IMR-90 (cell line): ENCODE measurements at regions of chr9 and their contacts with region 1.

Region 1: DNA sequence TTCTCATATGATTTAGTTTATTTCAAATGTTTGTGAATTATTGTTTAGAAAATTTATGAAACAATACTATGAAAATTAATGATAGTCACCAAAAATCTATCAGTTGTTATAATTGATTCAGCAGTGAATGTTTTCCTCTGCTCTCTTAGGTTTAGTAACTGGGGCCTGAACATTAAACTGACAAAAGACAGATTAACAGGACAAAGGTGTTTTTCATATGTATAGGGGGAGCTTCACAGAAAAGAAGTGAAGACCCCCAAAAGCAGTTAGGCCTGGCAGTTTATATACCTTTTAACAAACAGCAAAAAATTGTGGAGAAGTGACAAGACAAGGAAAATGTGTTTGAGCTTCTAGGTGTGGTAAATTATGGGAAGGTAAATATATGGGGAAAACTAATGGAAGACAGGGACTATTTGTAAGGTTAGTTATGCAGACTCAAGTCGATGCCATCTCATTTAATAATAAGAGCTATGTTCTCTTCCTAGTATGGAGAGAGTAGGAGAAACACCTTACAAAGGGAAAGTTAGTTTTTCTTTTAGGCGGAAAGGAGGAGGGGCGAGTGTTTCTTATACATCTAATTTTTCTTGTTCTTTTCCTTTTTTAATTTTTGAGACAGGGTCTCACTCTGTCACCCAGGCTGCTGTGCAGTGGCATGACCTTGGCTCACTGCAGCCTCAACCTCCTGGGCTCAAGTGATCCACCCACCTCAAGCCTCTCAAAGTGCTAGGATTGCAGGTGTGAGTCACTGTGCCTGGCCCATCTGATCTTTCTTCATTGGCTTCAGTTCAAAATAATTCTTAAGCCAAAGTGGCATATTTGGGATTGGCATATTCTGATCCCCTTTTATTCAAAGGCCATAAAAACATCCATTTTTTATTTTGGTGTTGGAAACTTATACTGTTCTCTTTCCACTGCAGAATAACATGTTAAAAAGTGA is 77.8 kb downstream of the C9orf153 start:
- DNase-seq: no peak
- ATAC-seq: no peak
- H3K4me3 ChIP-seq: no peak overlapping the region
- H3K27ac ChIP-seq: no peak overlapping the region
- H3K4me1 ChIP-seq: no peaks in the 10 kb centered on the region
- H3K27me3 ChIP-seq: peaks cover 2% of the 10 kb centered on the region; the same call in 1 of the 2 replicates
- CTCF ChIP-seq: no peak
- POLR2A ChIP-seq: no peak
- RAD21 ChIP-seq: no peak

Region 2: GRCh38 chr9:86046930-86047341 is 134.7 kb before region 1 on chr9:
- CTCF ChIA-PET with region 1: no interaction called
- POLR2A ChIA-PET with region 1: no interaction called
- dilution Hi-C with region 1: no loop called
- in situ Hi-C with region 1: no loop called
- intact Hi-C with region 1: no loop called
- DNase-seq: no peak
- ATAC-seq: no peak
- H3K4me3 ChIP-seq: no peak overlapping the region
- H3K27ac ChIP-seq: no peak overlapping the region
- H3K4me1 ChIP-seq: no peaks in the 10 kb centered on the region
- H3K27me3 ChIP-seq: no peaks in the 10 kb centered on the region
- CTCF ChIP-seq: no peak
- POLR2A ChIP-seq: no peak
- RAD21 ChIP-seq: no peak

Region 3: GRCh38 chr9:86389628-86390027 is 208.0 kb after region 1 on chr9:
- CTCF ChIA-PET with region 1: no interaction called
- POLR2A ChIA-PET with region 1: no interaction called
- dilution Hi-C with region 1: no loop called
- in situ Hi-C with region 1: no loop called
- intact Hi-C with region 1: no loop called
- DNase-seq: no peak
- ATAC-seq: no peak
- H3K4me3 ChIP-seq: no peak overlapping the region
- H3K27ac ChIP-seq: no peak overlapping the region
- H3K4me1 ChIP-seq: no peaks in the 10 kb centered on the region
- H3K27me3 ChIP-seq: peaks cover 2% of the 10 kb centered on the region; the same call in 1 of the 2 replicates
- CTCF ChIP-seq: no peak
- POLR2A ChIP-seq: no peak
- RAD21 ChIP-seq: no peak

Region 4: GRCh38 chr9:87401681-87402080 is 1220.0 kb after region 1 on chr9:
- CTCF ChIA-PET with region 1: no interaction called
- POLR2A ChIA-PET with region 1: no interaction called
- dilution Hi-C with region 1: no loop called
- in situ Hi-C with region 1: no loop called
- intact Hi-C with region 1: loop called (anchors 5 kb)
- DNase-seq: no peak
- ATAC-seq: no peak
- H3K4me3 ChIP-seq: no peak overlapping the region
- H3K27ac ChIP-seq: no peak overlapping the region
- H3K4me1 ChIP-seq: no peaks in the 10 kb centered on the region
- H3K27me3 ChIP-seq: peaks cover 4% of the 10 kb centered on the region; the same call in 1 of the 2 replicates
- CTCF ChIP-seq: no peak
- POLR2A ChIP-seq: no peak
- RAD21 ChIP-seq: no peak